GM12878 (cell line): ENCODE measurements at regions of chr3 and their contacts with region 1.

Region 1: DNA sequence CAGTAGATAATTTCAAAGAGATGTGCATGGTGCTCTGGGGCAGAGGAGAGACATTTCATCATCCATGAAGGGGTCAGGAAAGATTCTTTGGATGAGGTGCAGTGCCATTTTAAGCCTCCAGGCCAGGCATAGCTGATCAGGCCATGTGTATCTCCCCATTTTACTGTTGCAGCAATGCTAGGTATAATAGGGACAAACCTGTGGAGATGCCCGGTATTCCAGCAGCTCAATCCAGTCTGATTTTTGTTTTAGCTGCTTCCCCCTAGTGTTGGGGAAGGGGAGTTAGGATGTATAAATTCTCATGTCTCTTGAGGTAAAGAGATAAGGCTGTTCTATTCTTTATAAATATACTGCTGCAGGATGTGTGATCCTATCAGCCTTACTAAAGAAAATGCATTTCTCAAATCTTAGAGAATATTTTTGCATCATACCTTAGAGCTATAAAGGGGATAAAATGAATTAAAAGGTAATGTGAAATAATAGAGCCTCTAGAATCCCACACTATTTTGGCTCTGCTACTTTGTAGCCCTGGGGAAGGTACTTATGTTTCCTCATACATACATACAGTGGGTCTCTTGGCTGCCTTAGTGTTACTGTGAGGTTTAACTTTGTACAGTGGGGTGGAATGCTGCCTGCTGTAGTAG is 5.2 kb downstream of the CDV3 start:
- DNase-seq: no peak
- ATAC-seq: peak; percentile 6
- H3K4me3 ChIP-seq: peak overlapping the region; percentile 91
- H3K27ac ChIP-seq: no peak overlapping the region
- H3K4me1 ChIP-seq: peaks cover 12% of the 10 kb centered on the region
- H3K27me3 ChIP-seq: no peaks in the 10 kb centered on the region
- CTCF ChIP-seq: peak; percentile 27 to 51 (median 48); a peak in 5 of 6 replicates
- EP300 ChIP-seq: no peak
- POLR2A ChIP-seq: no peak
- RAD21 ChIP-seq: peak; percentile 47

Region 2: GRCh38 chr3:133457465-133458067 is 121.1 kb before region 1 on chr3:
- CTCF ChIA-PET with region 1: interaction called, 29 read pairs
- POLR2A ChIA-PET with region 1: interaction called, 17 read pairs
- RAD21 ChIA-PET with region 1: interaction called, 137 read pairs
- SMC1A ChIA-PET with region 1: interaction called, 92 read pairs
- in situ Hi-C with region 1: no loop called
- intact Hi-C with region 1: no loop called
- DNase-seq: no peak
- ATAC-seq: peak; percentile 64
- H3K4me3 ChIP-seq: no peak overlapping the region
- H3K27ac ChIP-seq: no peak overlapping the region
- H3K4me1 ChIP-seq: peaks cover 3% of the 10 kb centered on the region; the same call in 1 of the 2 replicates
- H3K27me3 ChIP-seq: no peaks in the 10 kb centered on the region
- CTCF ChIP-seq: peak; percentile 3 to 41 (median 24); a peak in 2 of 6 replicates
- EP300 ChIP-seq: no peak
- POLR2A ChIP-seq: no peak
- RAD21 ChIP-seq: peak; percentile 47

Region 3: GRCh38 chr3:133464573-133464972 is 114.1 kb before region 1 on chr3:
- CTCF ChIA-PET with region 1: interaction called, 36 read pairs
- POLR2A ChIA-PET with region 1: interaction called, 17 read pairs
- RAD21 ChIA-PET with region 1: interaction called, 137 read pairs
- SMC1A ChIA-PET with region 1: interaction called, 70 read pairs
- in situ Hi-C with region 1: no loop called
- intact Hi-C with region 1: loop called (anchors 2 kb)
- DNase-seq: no peak
- ATAC-seq: peak; percentile 65
- H3K4me3 ChIP-seq: no peak overlapping the region
- H3K27ac ChIP-seq: peak overlapping the region; percentile 4; the same call in 1 of the 2 replicates
- H3K4me1 ChIP-seq: peaks cover 58% of the 10 kb centered on the region
- H3K27me3 ChIP-seq: no peaks in the 10 kb centered on the region
- CTCF ChIP-seq: peak; percentile 22 to 32 (median 23); a peak in 3 of 6 replicates
- EP300 ChIP-seq: no peak
- POLR2A ChIP-seq: no peak
- RAD21 ChIP-seq: peak; percentile 58

Region 4: GRCh38 chr3:133506215-133506901 is 72.3 kb before region 1 on chr3:
- CTCF ChIA-PET with region 1: interaction called, 6 read pairs
- POLR2A ChIA-PET with region 1: interaction called, 16 read pairs
- RAD21 ChIA-PET with region 1: interaction called, 5 read pairs
- SMC1A ChIA-PET with region 1: interaction called, 23 read pairs
- in situ Hi-C with region 1: no loop called
- intact Hi-C with region 1: no loop called
- DNase-seq: peak; percentile 93
- ATAC-seq: peak; percentile 98
- H3K4me3 ChIP-seq: peak overlapping the region; percentile 43; the same call in 1 of the 2 replicates
- H3K27ac ChIP-seq: peak overlapping the region; percentile 97
- H3K4me1 ChIP-seq: peaks cover 18% of the 10 kb centered on the region
- H3K27me3 ChIP-seq: no peaks in the 10 kb centered on the region
- CTCF ChIP-seq: no peak
- EP300 ChIP-seq: peak in 1 of 2 experiments; percentile 61; a peak in 3 of 4 replicates
- POLR2A ChIP-seq: peak; percentile 49; the same call in 1 of the 2 replicates
- RAD21 ChIP-seq: 0 out of 2 replicates have a peak, but pooled peaks have one; percentile 17

Region 5: GRCh38 chr3:133620066-133620784 is 41.6 kb after region 1 on chr3:
- CTCF ChIA-PET with region 1: interaction called, 10 read pairs
- POLR2A ChIA-PET with region 1: interaction called, 4 read pairs
- RAD21 ChIA-PET with region 1: interaction called, 5 read pairs
- SMC1A ChIA-PET with region 1: interaction called, 5 read pairs
- in situ Hi-C with region 1: no loop called
- intact Hi-C with region 1: loop called (anchors 5 kb)
- DNase-seq: peak; percentile 94
- ATAC-seq: peak; percentile 99
- H3K4me3 ChIP-seq: no peak overlapping the region
- H3K27ac ChIP-seq: peak overlapping the region; percentile 56; the same call in 1 of the 2 replicates
- H3K4me1 ChIP-seq: peaks cover 20% of the 10 kb centered on the region
- H3K27me3 ChIP-seq: no peaks in the 10 kb centered on the region
- CTCF ChIP-seq: no peak
- EP300 ChIP-seq: no peak
- POLR2A ChIP-seq: no peak
- RAD21 ChIP-seq: no peak

Region 6: DNA sequence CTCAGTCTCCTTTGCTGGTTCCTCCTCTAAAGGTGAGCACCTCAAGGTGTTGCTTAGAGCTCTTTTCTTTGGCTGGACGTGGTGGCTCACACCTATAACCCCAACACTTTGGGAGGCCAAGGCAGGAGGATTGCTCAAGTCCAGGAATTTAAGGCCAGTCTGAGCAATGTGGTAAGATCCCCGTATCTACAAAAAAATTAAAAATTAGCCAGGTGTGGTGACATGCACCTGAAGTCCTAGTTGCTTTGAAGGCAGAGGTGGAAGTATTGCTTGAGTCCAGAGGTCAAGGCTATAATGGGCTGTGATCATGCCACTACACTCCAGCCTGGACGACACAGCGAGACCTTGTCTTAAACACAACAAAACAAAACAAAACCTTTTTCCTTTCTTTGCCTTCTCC is 54.8 kb after region 1 on chr3:
- CTCF ChIA-PET with region 1: interaction called, 3 read pairs
- POLR2A ChIA-PET with region 1: no interaction called
- RAD21 ChIA-PET with region 1: interaction called, 3 read pairs
- SMC1A ChIA-PET with region 1: interaction called, 14 read pairs
- in situ Hi-C with region 1: no loop called
- intact Hi-C with region 1: no loop called
- DNase-seq: no peak
- ATAC-seq: no peak
- H3K4me3 ChIP-seq: no peak overlapping the region
- H3K27ac ChIP-seq: no peak overlapping the region
- H3K4me1 ChIP-seq: no peaks in the 10 kb centered on the region
- H3K27me3 ChIP-seq: no peaks in the 10 kb centered on the region
- CTCF ChIP-seq: no peak
- EP300 ChIP-seq: no peak
- POLR2A ChIP-seq: no peak
- RAD21 ChIP-seq: no peak